Transverse colon (tissue), 4 donors: ENCODE measurements at regions of chr14 and their contacts with region 1.

Region 1: DNA sequence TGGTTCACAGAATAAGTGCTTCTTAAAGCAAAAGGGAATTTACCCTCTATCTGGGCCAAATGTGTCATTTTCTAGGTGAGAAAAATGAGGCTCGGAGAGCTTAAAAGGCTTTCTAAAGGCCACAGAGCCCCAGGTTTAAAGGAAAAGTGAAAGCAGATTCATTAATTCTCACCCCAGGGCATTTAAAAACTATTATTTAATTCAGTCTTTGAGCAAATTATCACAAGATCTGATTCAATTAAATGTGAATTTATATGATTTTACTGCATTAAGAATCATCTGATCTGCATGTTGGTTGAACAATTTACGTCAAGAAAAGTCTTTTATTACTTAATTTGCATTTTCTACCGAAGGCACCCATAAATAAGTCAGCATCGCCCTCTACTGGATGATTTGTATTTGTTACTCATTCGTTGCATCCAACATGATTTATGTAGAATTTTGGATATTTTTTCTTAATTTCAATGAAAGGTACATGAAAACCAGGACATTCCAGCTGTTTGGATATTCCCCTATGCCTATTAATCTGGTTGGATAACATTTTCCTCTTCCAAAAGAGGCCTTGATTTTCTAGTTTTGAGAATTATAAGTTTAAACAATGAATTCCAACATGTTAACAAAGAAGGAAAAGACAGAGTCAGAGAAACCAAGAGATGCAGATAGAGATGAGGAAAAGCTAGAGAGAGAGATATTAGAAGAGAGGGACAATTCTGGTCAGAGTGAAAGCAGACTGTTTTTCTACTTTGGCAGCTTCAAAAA is 19.1 kb upstream of the DHRS7 start:
- DNase-seq: no peak
- H3K4me3 ChIP-seq: peak overlapping the region in 3 of 4 donors; percentile 18 to 50 (median 40)
- H3K27ac ChIP-seq: peak overlapping the region; percentile 19 to 65 (median 36)
- H3K4me1 ChIP-seq: peaks cover 0 to 5% (median 2%) of the 10 kb centered on the region in 4 donors
- H3K27me3 ChIP-seq: no peaks in the 10 kb centered on the region
- CTCF ChIP-seq: peak; percentile 75 to 89 (median 82)
- EP300 ChIP-seq: no peak
- POLR2A ChIP-seq: no peak

Region 2: GRCh38 chr14:59964251-59965007 is 219.9 kb before region 1 on chr14:
- in situ Hi-C with region 1: loop called (anchors 5 to 10 kb)
- intact Hi-C with region 1: loop called (anchors 5 kb)
- DNase-seq: no peak
- H3K4me3 ChIP-seq: no peak overlapping the region
- H3K27ac ChIP-seq: no peak overlapping the region
- H3K4me1 ChIP-seq: peaks cover 0 to 4% (median 0%) of the 10 kb centered on the region in 4 donors
- H3K27me3 ChIP-seq: no peaks in the 10 kb centered on the region
- CTCF ChIP-seq: no peak
- EP300 ChIP-seq: no peak
- POLR2A ChIP-seq: no peak

Region 3: GRCh38 chr14:60051721-60052221 is 132.6 kb before region 1 on chr14:
- in situ Hi-C with region 1: loop called in 1 of 4 experiments (anchors 10 kb)
- intact Hi-C with region 1: no loop called
- DNase-seq: no peak
- H3K4me3 ChIP-seq: no peak overlapping the region
- H3K27ac ChIP-seq: no peak overlapping the region
- H3K4me1 ChIP-seq: no peaks in the 10 kb centered on the region
- H3K27me3 ChIP-seq: no peaks in the 10 kb centered on the region
- CTCF ChIP-seq: no peak
- EP300 ChIP-seq: no peak
- POLR2A ChIP-seq: no peak

Region 4: DNA sequence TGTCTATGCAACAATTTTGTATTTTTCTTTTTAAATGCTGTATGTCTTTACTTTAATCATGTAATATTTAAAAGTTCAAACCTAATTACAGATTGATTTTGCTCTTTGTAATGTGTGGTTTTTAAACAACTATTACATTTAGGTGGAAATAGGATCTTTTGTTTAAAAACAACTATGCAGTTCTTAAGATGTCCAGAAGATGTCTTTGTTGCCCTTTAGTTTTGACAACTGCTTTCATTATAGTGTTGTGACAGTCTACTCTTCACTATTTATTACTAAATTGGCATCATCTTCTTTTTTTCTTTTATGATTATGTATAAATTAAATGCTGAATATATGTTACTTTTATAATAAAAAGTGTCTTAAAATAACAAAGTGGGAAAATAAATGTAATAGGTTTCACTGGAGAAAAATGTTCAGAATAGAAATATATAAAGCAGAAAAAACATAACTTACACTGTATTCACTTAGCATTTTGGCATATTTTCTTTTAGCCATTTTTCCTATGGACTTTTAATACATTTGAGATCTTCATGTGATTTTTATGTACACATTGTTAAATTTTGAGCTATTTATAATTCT is 119.7 kb before region 1 on chr14:
- in situ Hi-C with region 1: loop called in 3 of 4 experiments (anchors 5 to 10 kb)
- intact Hi-C with region 1: loop called (anchors 10 kb)
- DNase-seq: no peak
- H3K4me3 ChIP-seq: no peak overlapping the region
- H3K27ac ChIP-seq: no peak overlapping the region
- H3K4me1 ChIP-seq: peaks cover 0 to 2% (median 0%) of the 10 kb centered on the region in 4 donors
- H3K27me3 ChIP-seq: peaks cover 6% of the 10 kb centered on the region
- CTCF ChIP-seq: peak; percentile 39 to 52 (median 50)
- EP300 ChIP-seq: no peak
- POLR2A ChIP-seq: no peak

Region 5: DNA sequence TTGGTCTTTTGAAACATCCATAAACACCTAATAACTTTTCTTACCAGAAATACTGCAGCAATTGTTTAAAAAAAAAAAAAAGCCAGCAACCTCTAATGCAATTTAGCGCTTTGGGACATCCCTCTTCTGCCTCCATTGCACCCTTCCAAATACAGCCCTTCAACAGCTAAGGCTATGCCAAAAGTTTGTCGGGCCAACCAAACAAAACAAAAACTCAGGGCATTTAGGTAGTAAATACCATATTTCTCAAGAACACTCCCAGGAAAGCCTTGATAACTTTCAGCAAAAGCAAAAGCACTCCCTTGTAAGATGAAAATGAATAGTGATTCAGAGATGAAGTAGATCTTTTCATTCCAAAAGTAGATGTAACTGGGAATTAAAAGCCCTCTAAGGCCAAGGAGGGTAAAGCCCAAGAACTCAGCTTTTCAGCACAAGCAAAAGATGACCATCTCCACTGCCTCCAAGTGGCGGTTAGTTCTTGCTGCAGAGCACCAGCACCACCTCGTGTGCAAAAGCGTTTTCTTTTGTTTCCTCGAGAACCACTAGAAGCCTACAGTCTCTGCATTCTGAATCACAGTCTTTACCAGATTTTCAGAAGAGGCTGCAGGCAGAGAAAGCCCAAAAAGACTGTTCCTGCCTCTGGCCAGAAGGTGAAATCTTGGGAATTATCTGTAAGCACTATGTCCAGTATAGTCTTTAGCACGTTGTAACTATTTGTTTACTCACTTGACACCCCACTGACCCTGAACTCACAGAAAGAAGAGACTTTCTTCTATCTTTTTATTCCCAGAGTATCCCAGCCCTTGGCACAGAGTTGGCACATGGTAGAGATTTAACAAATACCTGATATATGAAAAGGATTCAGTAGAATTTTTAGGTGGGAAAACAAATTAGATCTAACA is 377.8 kb after region 1 on chr14:
- in situ Hi-C with region 1: loop called in 1 of 4 experiments (anchors 25 kb)
- intact Hi-C with region 1: no loop called
- DNase-seq: peak; percentile 11
- H3K4me3 ChIP-seq: no peak overlapping the region
- H3K27ac ChIP-seq: no peak overlapping the region
- H3K4me1 ChIP-seq: no peaks in the 10 kb centered on the region
- H3K27me3 ChIP-seq: no peaks in the 10 kb centered on the region
- CTCF ChIP-seq: peak; percentile 16 to 37 (median 30)
- EP300 ChIP-seq: no peak
- POLR2A ChIP-seq: no peak